Activated CD4-positive, alpha-beta memory T cell treated with anti-CD3 and anti-CD28 coated beads for 36 hours (primary cell): ENCODE measurements at regions of chr7 and their contacts with region 1.

Region 1: DNA sequence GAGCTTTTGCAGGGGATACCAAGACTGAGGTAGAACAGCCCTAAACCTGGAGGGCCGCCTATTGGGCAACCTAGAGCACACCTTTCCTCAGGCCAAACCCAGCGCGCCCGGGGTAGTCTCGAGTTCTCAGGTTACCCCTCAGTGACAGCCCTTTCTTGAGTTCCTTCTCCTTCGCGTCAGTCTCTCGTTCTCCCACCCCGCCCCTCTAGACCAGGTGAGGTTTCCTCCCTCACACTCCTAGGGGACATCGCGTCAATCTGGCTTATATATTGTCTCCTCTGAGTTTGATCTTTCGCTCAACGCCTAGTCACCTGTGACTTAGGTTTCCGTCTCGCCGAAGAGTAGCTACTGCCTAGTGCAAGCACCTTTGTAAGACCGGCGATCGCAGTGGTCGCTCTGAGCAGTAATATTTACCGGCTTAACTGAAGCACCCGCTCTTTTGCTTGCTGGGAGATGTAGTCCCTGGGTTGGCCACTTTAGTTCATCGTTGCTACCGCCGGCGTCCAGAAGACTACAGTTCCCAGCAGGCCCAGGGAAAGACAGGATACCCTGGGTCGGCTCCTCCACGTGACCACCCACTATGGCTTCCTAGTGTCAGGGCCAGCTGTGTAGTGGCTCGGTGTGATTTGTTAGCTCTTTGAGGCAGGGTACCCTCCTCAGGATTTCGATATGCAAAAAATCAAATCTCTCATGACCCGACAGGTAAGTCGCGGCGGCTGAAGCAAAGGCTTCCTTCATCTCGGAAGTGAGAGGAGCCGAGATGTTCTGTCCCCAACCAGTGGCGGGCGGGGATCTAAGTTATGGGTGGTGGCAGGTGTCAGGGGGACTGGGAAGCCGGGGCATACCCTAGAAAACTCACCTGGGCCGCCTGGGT is at the start of gene VPS50:
- DNase-seq: peak; percentile 95
- H3K4me3 Mint-ChIP-seq: peak within 1 kb of the TSS; percentile 91
- H3K27ac Mint-ChIP-seq: peak within 1 kb of the TSS; percentile 90
- H3K4me1 Mint-ChIP-seq: peaks cover 11% of the 10 kb centered on the region
- H3K27me3 Mint-ChIP-seq: no peaks in the 10 kb centered on the region
- total RNA-seq, gene VPS50: 15.2 to 18.0 TPM

Region 2: GRCh38 chr7:92528188-92528957 is 703.7 kb before region 1 on chr7 and contains the starts of genes PEX1 and RBM48:
- CTCF ChIA-PET with region 1: interaction called, 4 read pairs
- POLR2A ChIA-PET with region 1: interaction called, 3 read pairs
- intact Hi-C with region 1: loop called (anchors 1 kb)
- DNase-seq: peak; percentile 98
- H3K4me3 Mint-ChIP-seq: peak within 1 kb of the TSS; percentile 90
- H3K27ac Mint-ChIP-seq: peak within 1 kb of the TSS; percentile 89
- H3K4me1 Mint-ChIP-seq: peaks cover 23% of the 10 kb centered on the region
- H3K27me3 Mint-ChIP-seq: peaks cover 2% of the 10 kb centered on the region
- total RNA-seq, gene PEX1: 16.9 to 17.0 TPM
- total RNA-seq, gene RBM48: 11.7 to 14.0 TPM

Region 3: DNA sequence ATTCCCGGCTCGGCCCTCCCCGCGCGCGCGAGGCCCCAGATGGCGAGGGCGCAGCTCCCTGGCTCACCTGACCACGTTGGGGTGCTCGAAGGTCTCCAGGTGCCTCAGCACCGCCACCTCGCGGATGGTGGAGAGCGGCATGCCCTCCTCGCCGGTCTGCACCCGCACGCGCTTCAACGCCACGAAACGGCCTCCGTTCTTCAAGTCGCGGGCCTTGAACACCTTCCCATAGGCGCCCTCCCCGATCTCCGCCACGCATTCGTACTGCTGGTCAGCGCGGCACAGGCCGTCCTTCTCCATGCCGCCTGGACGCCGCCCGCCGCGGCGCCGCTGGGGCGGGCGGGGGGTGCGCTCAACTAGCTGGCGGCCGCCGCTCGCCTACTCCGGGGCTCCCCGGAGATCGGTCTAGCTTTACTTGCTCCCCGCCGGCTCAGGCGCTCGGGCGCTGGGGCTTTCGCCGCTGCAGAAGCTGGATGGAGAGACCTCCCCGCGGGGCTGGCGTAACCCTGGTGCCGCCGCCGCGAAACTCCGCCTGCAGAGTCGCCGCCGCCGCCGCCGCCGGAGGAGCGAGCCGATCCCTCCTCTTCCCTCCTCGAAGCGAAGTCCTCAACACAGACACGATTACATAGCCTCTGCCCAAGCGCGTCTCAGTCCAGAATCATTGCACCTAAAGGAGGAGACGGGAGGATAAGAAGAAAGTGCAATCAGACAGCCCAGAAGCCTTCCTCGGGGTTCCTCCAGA is 398.8 kb before region 1 on chr7:
- CTCF ChIA-PET with region 1: no interaction called
- POLR2A ChIA-PET with region 1: interaction called, 3 read pairs
- intact Hi-C with region 1: loop called (anchors 2 kb)
- DNase-seq: peak; percentile 94
- H3K4me3 Mint-ChIP-seq: peak overlapping the region; percentile 97
- H3K27ac Mint-ChIP-seq: peak overlapping the region; percentile 98
- H3K4me1 Mint-ChIP-seq: peaks cover 43% of the 10 kb centered on the region
- H3K27me3 Mint-ChIP-seq: no peaks in the 10 kb centered on the region

Region 4: DNA sequence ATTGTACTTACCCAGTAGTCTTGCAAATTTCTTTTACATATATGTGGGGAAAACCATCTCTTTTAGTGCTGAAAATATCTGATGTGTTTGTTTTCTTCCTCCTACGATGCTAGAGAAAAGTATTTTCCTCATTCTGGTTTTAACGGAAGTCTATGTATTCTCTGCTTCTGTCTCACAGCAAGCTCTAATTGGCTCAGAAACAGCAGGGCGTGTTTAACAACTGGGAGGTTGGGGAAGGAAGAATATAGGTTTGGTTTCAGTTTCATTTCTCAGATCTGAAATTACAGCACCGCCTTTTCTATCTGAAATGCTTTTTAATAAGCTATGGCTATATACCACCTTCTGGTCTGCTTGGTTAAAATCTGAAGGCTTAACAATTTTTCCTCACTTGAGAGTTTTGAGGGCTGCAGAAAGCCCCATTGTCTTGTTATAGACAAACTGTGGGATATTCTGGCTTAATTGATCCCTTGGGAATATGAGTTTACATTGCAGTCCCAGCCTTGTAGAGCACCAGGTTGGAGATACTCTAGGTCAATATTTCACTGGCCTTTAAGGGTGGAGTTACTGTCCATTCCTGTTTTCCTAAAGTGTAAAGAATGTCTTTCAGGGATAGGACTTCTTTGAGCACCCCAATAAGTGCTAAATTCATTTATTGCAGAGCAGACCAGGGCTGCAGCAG is 114.0 kb before region 1 on chr7 and contains the start of gene SAMD9:
- CTCF ChIA-PET with region 1: interaction called, 8 read pairs
- POLR2A ChIA-PET with region 1: no interaction called
- intact Hi-C with region 1: loop called (anchors 1 kb)
- DNase-seq: peak; percentile 55
- H3K4me3 Mint-ChIP-seq: peak within 1 kb of the TSS; percentile 69
- H3K27ac Mint-ChIP-seq: peak within 1 kb of the TSS; percentile 69
- H3K4me1 Mint-ChIP-seq: peaks cover 50% of the 10 kb centered on the region
- H3K27me3 Mint-ChIP-seq: no peaks in the 10 kb centered on the region
- total RNA-seq, gene SAMD9: 6.9 to 7.2 TPM

Region 5: GRCh38 chr7:93185303-93186027 is 46.6 kb before region 1 on chr7:
- CTCF ChIA-PET with region 1: interaction called, 5 read pairs
- POLR2A ChIA-PET with region 1: no interaction called
- intact Hi-C with region 1: loop called (anchors 1 kb)
- DNase-seq: peak; percentile 28
- H3K4me3 Mint-ChIP-seq: no peak overlapping the region
- H3K27ac Mint-ChIP-seq: no peak overlapping the region
- H3K4me1 Mint-ChIP-seq: peaks cover 9% of the 10 kb centered on the region
- H3K27me3 Mint-ChIP-seq: peaks cover 40% of the 10 kb centered on the region

Region 6: DNA sequence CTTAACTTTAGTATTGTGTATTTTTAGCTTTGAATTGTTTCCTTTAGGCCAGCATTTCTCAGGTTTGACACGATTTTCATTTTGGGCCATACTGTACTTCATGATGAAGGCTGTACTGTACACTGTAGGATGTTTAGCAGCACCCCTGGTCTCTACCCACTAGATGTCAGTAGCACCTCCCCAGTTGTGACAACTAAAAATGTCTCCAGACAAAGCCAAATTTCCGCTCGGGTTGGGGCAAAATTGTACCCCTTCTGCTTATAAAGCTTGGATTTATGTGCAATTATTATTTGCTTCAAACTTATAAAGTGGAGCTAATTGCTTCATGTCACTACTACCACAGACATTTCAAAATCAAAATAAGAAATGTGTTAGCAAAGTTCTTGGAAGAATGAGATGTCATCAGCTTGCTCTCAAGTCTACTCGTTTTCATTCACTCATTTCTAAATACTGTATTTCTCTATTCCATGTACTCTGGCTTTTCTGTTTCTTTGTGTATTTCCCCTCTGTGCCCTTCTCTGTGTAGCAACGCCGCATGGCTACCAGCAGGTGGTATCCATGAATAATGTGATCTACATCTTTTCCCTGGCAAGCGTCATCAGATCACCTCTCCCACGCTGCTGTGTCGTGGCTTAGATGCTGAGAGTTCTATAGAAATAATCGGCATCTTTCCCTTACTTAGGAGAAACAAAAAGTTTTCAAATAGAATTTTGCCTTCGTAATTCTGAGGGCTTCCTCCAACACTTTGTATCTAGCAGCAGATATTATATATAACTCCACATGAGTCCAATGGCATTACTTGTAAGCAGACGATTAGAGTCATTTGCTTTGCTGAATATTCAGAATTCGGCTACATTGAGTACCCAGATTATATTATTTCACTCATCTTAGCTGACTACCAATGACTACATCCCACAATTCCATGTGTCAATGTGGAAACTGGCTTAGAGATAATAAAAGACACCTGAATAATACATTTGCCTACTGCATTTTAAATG is 390.3 kb after region 1 on chr7:
- CTCF ChIA-PET with region 1: no interaction called
- POLR2A ChIA-PET with region 1: no interaction called
- intact Hi-C with region 1: no loop called
- DNase-seq: no peak
- H3K4me3 Mint-ChIP-seq: no peak overlapping the region
- H3K27ac Mint-ChIP-seq: no peak overlapping the region
- H3K4me1 Mint-ChIP-seq: no peaks in the 10 kb centered on the region
- H3K27me3 Mint-ChIP-seq: no peaks in the 10 kb centered on the region

Region 7: DNA sequence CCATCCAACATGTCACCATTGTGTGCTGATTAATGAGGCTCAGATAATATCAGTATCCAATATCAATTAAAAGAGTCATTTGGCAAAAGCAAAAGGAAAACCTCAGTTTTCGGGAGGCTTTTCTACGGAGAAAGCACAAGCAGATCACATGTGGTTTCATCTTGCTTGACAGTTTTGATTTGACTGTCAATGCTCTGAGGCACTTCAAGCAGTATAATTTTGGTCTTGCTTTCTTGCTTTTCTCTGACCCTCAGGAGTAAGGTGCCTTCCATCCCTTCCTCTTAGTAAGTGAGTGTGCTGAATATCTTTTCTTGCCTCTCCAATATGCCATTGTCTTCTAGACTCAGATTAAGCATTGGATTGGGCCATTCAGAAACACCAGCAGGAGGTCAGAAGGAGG is 458.0 kb after region 1 on chr7:
- CTCF ChIA-PET with region 1: no interaction called
- POLR2A ChIA-PET with region 1: no interaction called
- intact Hi-C with region 1: no loop called
- DNase-seq: no peak
- H3K4me3 Mint-ChIP-seq: no peak overlapping the region
- H3K27ac Mint-ChIP-seq: no peak overlapping the region
- H3K4me1 Mint-ChIP-seq: no peaks in the 10 kb centered on the region
- H3K27me3 Mint-ChIP-seq: no peaks in the 10 kb centered on the region

Region 8: GRCh38 chr7:94087664-94088352 is 855.8 kb after region 1 on chr7:
- CTCF ChIA-PET with region 1: interaction called, 4 read pairs
- POLR2A ChIA-PET with region 1: no interaction called
- intact Hi-C with region 1: loop called (anchors 5 kb)
- DNase-seq: peak; percentile 63
- H3K4me3 Mint-ChIP-seq: peak overlapping the region; percentile 33
- H3K27ac Mint-ChIP-seq: no peak overlapping the region
- H3K4me1 Mint-ChIP-seq: peaks cover 6% of the 10 kb centered on the region
- H3K27me3 Mint-ChIP-seq: peaks cover 18% of the 10 kb centered on the region